Transverse colon (tissue), 4 donors: ENCODE measurements at regions of chr22 and their contacts with region 1.

Region 1: GRCh38 chr22:18001040-18001893 is 23.1 kb downstream of the MICAL3 start:
- DNase-seq: peak; percentile 92
- H3K4me3 ChIP-seq: peak overlapping the region; percentile 55 to 93 (median 78)
- H3K27ac ChIP-seq: peak overlapping the region; percentile 88 to 97 (median 94)
- H3K4me1 ChIP-seq: peaks cover 12 to 45% (median 30%) of the 10 kb centered on the region in 4 donors
- H3K27me3 ChIP-seq: no peaks in the 10 kb centered on the region
- CTCF ChIP-seq: peak; percentile 33 to 78 (median 54)
- EP300 ChIP-seq: no peak
- POLR2A ChIP-seq: peak; percentile 83

Region 2: GRCh38 chr22:17853073-17853472 is 148.2 kb before region 1 on chr22:
- in situ Hi-C with region 1: no loop called
- intact Hi-C with region 1: no loop called
- DNase-seq: no peak
- H3K4me3 ChIP-seq: no peak overlapping the region
- H3K27ac ChIP-seq: peak overlapping the region; percentile 29 to 64 (median 50)
- H3K4me1 ChIP-seq: peaks cover 10 to 29% (median 15%) of the 10 kb centered on the region in 4 donors
- H3K27me3 ChIP-seq: no peaks in the 10 kb centered on the region
- CTCF ChIP-seq: no peak
- EP300 ChIP-seq: no peak
- POLR2A ChIP-seq: no peak

Region 3: DNA sequence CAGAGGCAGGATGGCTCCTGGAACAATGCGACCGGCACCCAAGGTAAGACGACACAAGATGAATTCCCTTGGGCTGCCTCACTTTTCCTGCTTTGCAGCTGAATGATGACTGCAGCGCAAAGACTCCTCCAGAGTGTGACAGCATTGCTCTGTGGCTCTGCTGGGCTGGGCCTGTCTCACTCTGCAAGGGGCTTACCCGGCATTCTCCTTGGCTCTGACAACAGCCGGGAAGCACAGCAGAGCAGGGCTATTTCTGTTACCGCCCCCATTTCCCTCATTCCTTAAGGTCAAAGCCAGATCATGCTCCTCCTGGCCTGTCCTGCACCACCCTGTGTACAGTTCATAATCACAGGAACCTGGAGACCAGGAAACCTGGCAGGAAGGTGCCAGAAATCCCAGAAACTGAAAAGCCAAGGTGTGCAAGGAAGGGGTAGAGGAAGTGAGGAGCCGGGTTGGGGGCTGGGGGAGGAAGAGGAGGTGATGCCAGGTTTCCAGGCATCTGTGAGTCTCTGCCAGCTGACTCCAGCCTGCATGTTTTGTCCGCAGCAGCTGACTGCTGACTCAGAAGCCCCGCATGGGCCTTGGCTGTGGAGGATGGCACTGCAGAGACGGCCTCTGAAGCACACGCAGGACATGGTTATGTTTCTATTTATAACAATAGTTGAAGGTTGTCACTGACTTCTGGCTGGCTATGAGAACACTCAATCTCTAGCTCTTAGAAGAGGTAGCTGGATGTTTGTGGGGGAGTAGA is 90.5 kb before region 1 on chr22:
- in situ Hi-C with region 1: no loop called
- intact Hi-C with region 1: loop called (anchors 2 kb)
- DNase-seq: peak; percentile 40
- H3K4me3 ChIP-seq: no peak overlapping the region
- H3K27ac ChIP-seq: peak overlapping the region; percentile 72 to 81 (median 76)
- H3K4me1 ChIP-seq: peaks cover 8 to 36% (median 22%) of the 10 kb centered on the region in 4 donors
- H3K27me3 ChIP-seq: no peaks in the 10 kb centered on the region
- CTCF ChIP-seq: no peak
- EP300 ChIP-seq: no peak
- POLR2A ChIP-seq: no peak